Activated naive CD4-positive, alpha-beta T cell treated with anti-CD3 and anti-CD28 coated beads, Interleukin-2, amount 10 ng/mL, durations not matched to agents 7 days and 5 days (primary cell): ENCODE measurements at regions of chr9 and their contacts with region 1.

Region 1: GRCh38 chr9:70392189-70392588 is 22.3 kb downstream of the KLF9 start:
- DNase-seq: peak; percentile 23
- H3K4me3 Mint-ChIP-seq: no peak overlapping the region
- H3K27ac Mint-ChIP-seq: no peak overlapping the region
- H3K4me1 Mint-ChIP-seq: peaks cover 57% of the 10 kb centered on the region
- H3K27me3 Mint-ChIP-seq: no peaks in the 10 kb centered on the region

Region 2: GRCh38 chr9:70352802-70353201 is 39.4 kb before region 1 on chr9:
- CTCF ChIA-PET with region 1: interaction called, 10 read pairs
- DNase-seq: no peak
- H3K4me3 Mint-ChIP-seq: no peak overlapping the region
- H3K27ac Mint-ChIP-seq: no peak overlapping the region
- H3K4me1 Mint-ChIP-seq: no peaks in the 10 kb centered on the region
- H3K27me3 Mint-ChIP-seq: no peaks in the 10 kb centered on the region

Region 3: GRCh38 chr9:70465398-70465797 is 73.2 kb after region 1 on chr9:
- CTCF ChIA-PET with region 1: no interaction called
- DNase-seq: no peak
- H3K4me3 Mint-ChIP-seq: no peak overlapping the region
- H3K27ac Mint-ChIP-seq: no peak overlapping the region
- H3K4me1 Mint-ChIP-seq: peaks cover 25% of the 10 kb centered on the region
- H3K27me3 Mint-ChIP-seq: no peaks in the 10 kb centered on the region